Psoas muscle (tissue), 8 donors: ENCODE measurements at regions of chr6 and their contacts with region 1.

Region 1: GRCh38 chr6:6766230-6766905 is 177.8 kb downstream of the LY86 start:
- DNase-seq: no peak
- ATAC-seq: peak; percentile 80 to 89 (median 83)
- H3K4me3 ChIP-seq: peak overlapping the region; percentile 33
- H3K27ac ChIP-seq: peak overlapping the region; percentile 74
- H3K4me1 ChIP-seq: peaks cover 25% of the 10 kb centered on the region
- H3K27me3 ChIP-seq: no peaks in the 10 kb centered on the region
- CTCF ChIP-seq: no peak

Region 2: DNA sequence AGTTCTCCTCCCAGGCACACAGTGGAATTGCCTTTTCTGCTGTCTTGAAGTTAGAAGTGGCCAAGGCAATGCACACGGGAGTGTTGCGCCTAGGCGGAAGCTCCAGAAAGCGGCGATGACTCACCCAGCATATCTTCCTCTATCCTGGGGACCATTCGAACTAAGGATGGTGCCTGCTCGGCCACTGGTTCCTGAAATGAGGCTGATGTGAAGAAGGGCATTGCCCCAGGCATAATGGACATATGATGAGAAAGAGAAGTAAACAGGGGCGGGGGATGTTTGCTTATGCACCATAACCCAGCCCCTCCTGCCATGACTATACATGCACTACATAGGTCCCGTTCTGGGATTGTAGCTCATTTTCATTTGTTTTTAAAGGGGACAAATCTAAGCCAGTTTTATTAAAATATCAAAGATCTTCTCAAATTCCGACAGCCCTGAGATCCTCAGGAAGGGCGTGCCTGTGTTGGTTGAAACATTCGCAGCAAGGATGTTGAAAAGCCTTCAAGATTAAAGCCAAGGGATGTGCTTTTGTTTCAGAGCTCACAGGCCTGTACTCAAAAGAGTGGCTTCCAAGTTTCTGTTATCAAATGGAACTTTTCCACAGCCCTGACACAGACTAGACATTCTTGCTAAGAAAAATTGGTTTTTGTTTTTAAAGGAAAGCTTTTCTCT is 40.6 kb after region 1 on chr6:
- intact Hi-C with region 1: loop called in 1 of 2 experiments (anchors 5 kb)
- DNase-seq: no peak
- ATAC-seq: peak in 2 of 4 donors; percentile 19 to 21
- H3K4me3 ChIP-seq: no peak overlapping the region
- H3K27ac ChIP-seq: no peak overlapping the region
- H3K4me1 ChIP-seq: peaks cover 13% of the 10 kb centered on the region
- H3K27me3 ChIP-seq: no peaks in the 10 kb centered on the region
- CTCF ChIP-seq: no peak

Region 3: GRCh38 chr6:6918216-6918983 is 152.0 kb after region 1 on chr6:
- intact Hi-C with region 1: no loop called
- DNase-seq: no peak
- ATAC-seq: peak; percentile 56 to 65 (median 62)
- H3K4me3 ChIP-seq: no peak overlapping the region
- H3K27ac ChIP-seq: peak overlapping the region; percentile 69
- H3K4me1 ChIP-seq: peaks cover 46% of the 10 kb centered on the region
- H3K27me3 ChIP-seq: no peaks in the 10 kb centered on the region
- CTCF ChIP-seq: no peak